ENCODE measurements at regions of chr5 and their contacts with region 1.

Region 1: GRCh38 chr5:170225326-170226128 is 7.3 kb upstream of the C5orf58 start:
- DNase-seq: peak; percentile 74 to 90 (median 76)
- ATAC-seq: peak; percentile 77 to 82
- H3K4me3 ChIP-seq: no peak overlapping the region
- H3K27ac ChIP-seq: no peak overlapping the region
- H3K4me1 ChIP-seq: peaks cover 3% of the 10 kb centered on the region
- H3K27me3 ChIP-seq: no peaks in the 10 kb centered on the region

Region 2: GRCh38 chr5:170348137-170348633 is 122.7 kb after region 1 on chr5:
- intact Hi-C with region 1: loop called in 1 of 4 experiments (anchors 5 kb)
- DNase-seq: no peak
- ATAC-seq: peak; percentile 34 to 47
- H3K4me3 ChIP-seq: no peak overlapping the region
- H3K27ac ChIP-seq: no peak overlapping the region
- H3K4me1 ChIP-seq: no peaks in the 10 kb centered on the region
- H3K27me3 ChIP-seq: no peaks in the 10 kb centered on the region

Region 3: DNA sequence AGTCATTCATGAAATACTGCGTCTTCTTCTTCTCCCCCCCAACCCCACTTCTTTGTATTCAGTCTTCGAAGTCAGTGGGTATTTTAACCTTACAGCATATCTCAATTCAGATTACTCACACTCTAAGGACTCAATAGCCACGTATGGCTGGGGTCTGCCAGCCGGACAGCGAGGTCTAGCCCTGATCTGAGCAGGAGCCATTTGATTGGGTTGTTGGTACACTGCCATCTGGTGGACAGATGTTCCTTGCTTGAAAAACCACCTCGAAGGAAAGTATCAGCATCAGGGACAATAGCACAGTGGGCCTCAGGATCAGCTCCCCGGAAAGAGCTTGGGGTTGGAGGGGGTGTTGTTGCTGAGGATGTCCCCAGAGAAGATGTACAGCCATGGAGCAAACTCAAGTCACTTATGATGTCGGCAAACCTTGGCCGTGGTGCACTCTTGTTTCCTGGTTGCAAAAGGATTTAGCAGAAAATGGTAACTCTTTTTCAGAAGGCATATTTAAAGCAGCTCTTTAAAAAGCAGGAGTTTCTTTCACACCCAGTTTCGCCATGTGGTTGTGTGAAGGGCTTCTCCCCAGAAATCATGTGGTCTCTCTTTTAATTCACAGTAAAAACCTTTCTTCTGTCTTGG is 195.4 kb after region 1 on chr5:
- intact Hi-C with region 1: loop called in 3 of 4 experiments (anchors 2 to 5 kb)
- DNase-seq: peak in 2 of 3 donors; percentile 56 to 66
- ATAC-seq: peak; percentile 63 to 73
- H3K4me3 ChIP-seq: no peak overlapping the region
- H3K27ac ChIP-seq: no peak overlapping the region
- H3K4me1 ChIP-seq: no peaks in the 10 kb centered on the region
- H3K27me3 ChIP-seq: no peaks in the 10 kb centered on the region